ENCODE measurements at regions of chr12 and their contacts with region 1.

Region 1: GRCh38 chr12:12126551-12126950 is 55.8 kb downstream of the BCL2L14 start:
- DNase-seq: no peak
- ATAC-seq: no peak
- H3K4me3 ChIP-seq: no peak overlapping the region
- H3K27ac ChIP-seq: no peak overlapping the region
- H3K4me1 ChIP-seq: no peaks in the 10 kb centered on the region
- H3K27me3 ChIP-seq: no peaks in the 10 kb centered on the region
- CTCF ChIP-seq: no peak
- POLR2A ChIP-seq: no peak
- RAD21 ChIP-seq: no peak

Region 2: DNA sequence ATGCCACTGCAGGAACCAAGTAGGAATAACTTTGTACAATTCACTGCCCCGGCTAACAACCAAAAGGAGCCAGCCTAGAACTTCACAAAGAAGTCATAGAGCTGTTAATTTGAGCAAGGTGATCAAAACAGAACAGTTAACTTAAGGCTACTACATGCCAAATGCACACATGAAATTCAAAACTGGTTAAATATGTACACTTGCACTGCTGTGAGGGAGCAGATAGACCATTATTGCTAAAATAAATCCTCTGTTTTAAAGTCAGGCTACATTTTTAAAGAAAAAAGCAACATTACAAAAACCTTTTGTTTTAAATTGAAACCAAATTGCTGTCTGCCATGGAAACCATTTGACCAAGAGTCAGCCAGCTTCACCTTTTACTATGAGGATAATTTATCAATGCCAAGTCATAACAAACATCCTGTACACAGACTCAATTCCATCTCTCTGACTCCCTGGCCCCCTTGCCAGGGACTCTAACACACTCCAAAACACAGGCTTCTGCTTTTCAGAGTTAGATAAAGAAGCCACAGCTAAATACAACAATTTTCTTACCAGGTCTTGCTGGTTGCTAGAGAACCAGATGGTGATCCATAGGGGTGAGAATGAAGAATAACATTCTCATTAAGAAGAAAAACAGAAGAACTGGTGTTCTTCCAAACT is 56.3 kb after region 1 on chr12:
- CTCF ChIA-PET with region 1: no interaction called
- POLR2A ChIA-PET with region 1: no interaction called
- dilution Hi-C with region 1: no loop called
- in situ Hi-C with region 1: no loop called
- intact Hi-C with region 1: loop called (anchors 5 kb)
- DNase-seq: peak; percentile 86
- ATAC-seq: peak; percentile 75
- H3K4me3 ChIP-seq: no peak overlapping the region
- H3K27ac ChIP-seq: no peak overlapping the region
- H3K4me1 ChIP-seq: peaks cover 9% of the 10 kb centered on the region; the same call in 1 of the 2 replicates
- H3K27me3 ChIP-seq: no peaks in the 10 kb centered on the region
- CTCF ChIP-seq: no peak
- POLR2A ChIP-seq: no peak
- RAD21 ChIP-seq: no peak

Measured in IMR-90 (cell line).